SK-N-SH (cell line): ENCODE measurements at regions of chr5 and their contacts with region 1.

Region 1: GRCh38 chr5:141968914-141969608 is at the start of gene RNF14:
- DNase-seq: peak; percentile 97
- H3K4me3 ChIP-seq: peak within 1 kb of the TSS; percentile 81 to 85
- H3K27ac ChIP-seq: peak within 1 kb of the TSS; percentile 84 to 90
- H3K4me1 ChIP-seq: peaks cover 7 to 13% of the 10 kb centered on the region in 2 experiments; a peak in 3 of 4 replicates
- H3K27me3 ChIP-seq: no peaks in the 10 kb centered on the region
- CTCF ChIP-seq: peak; percentile 79
- EP300 ChIP-seq: no peak
- RAD21 ChIP-seq: no peak
- polyA plus RNA-seq, gene RNF14: 24.5 and 26.3 TPM in 2 replicates

Region 2: GRCh38 chr5:141672848-141673813 is 295.9 kb before region 1 on chr5:
- CTCF ChIA-PET with region 1: interaction called, 10 read pairs
- POLR2A ChIA-PET with region 1: no interaction called
- DNase-seq: no peak
- H3K4me3 ChIP-seq: no peak overlapping the region
- H3K27ac ChIP-seq: no peak overlapping the region
- H3K4me1 ChIP-seq: no peaks in the 10 kb centered on the region
- H3K27me3 ChIP-seq: no peaks in the 10 kb centered on the region
- CTCF ChIP-seq: no peak
- EP300 ChIP-seq: no peak
- RAD21 ChIP-seq: no peak

Region 3: DNA sequence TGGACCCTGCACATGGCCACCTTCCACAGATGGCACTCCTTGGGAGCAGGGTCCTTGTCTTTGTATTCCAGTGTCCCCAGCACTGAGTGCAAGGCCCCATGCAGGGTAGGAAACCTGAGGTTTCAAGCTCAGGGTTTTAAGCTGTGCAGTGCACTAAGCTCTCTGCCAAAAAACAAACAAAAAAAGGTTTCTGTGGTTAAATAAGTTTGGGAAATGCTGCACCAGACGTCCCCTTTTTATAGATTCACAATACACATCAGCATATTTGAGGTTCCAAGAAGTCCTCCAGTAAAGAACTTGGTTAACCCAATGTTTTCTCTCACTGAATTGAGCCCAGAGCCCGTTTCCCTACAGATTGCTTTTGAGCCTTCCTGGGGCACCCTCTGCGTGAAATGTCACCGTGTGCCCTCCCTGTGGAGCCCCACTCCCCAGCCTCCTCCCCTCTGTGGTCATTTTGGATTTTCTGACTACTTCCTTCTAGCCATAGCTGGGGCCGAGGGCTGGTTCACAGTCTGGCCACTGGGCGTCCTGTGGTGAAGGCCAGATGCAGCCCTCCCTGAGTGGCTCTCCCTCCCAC is 28.3 kb before region 1 on chr5:
- CTCF ChIA-PET with region 1: interaction called, 15 read pairs
- POLR2A ChIA-PET with region 1: no interaction called
- DNase-seq: no peak
- H3K4me3 ChIP-seq: no peak overlapping the region
- H3K27ac ChIP-seq: peak overlapping the region in 1 of 2 experiments; percentile 20; a peak in 1 of 4 replicates
- H3K4me1 ChIP-seq: peaks cover 0 to 15% of the 10 kb centered on the region in 2 experiments; a peak in 1 of 4 replicates
- H3K27me3 ChIP-seq: no peaks in the 10 kb centered on the region
- CTCF ChIP-seq: no peak; the same call in 1 of the 2 replicates
- EP300 ChIP-seq: no peak
- RAD21 ChIP-seq: no peak

Region 4: DNA sequence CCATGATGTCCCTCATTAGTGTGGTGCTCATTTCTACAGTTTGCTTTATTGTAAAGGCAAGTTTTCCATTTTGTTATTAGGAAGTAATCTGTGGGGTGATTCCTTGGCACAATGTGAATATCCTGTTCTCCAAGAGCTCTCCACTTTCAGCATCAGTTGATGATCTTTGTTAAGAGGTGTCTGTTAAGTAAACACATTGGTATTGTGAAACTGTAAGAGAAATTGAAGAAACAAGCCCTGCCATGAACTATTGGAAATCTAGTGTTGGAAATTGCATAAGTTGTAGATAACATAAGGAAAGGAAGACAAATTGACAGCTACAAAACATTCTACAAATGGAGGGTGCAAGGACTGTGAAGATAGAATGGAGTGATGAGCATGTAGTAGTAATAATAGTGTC is 17.0 kb after region 1 on chr5:
- CTCF ChIA-PET with region 1: interaction called, 20 read pairs
- POLR2A ChIA-PET with region 1: interaction called, 5 read pairs
- DNase-seq: no peak
- H3K4me3 ChIP-seq: no peak overlapping the region
- H3K27ac ChIP-seq: no peak overlapping the region
- H3K4me1 ChIP-seq: no peaks in the 10 kb centered on the region
- H3K27me3 ChIP-seq: no peaks in the 10 kb centered on the region
- CTCF ChIP-seq: no peak
- EP300 ChIP-seq: no peak
- RAD21 ChIP-seq: no peak

Region 5: GRCh38 chr5:141992349-141992963 is 23.4 kb after region 1 on chr5:
- CTCF ChIA-PET with region 1: interaction called, 20 read pairs
- POLR2A ChIA-PET with region 1: no interaction called
- DNase-seq: peak; percentile 65
- H3K4me3 ChIP-seq: no peak overlapping the region; a peak in 1 of 4 replicates
- H3K27ac ChIP-seq: no peak overlapping the region
- H3K4me1 ChIP-seq: no peaks in the 10 kb centered on the region
- H3K27me3 ChIP-seq: no peaks in the 10 kb centered on the region
- CTCF ChIP-seq: peak; percentile 90
- EP300 ChIP-seq: no peak
- RAD21 ChIP-seq: peak; percentile 75